ENCODE measurements at regions of chr4 and their contacts with region 1.

Region 1: DNA sequence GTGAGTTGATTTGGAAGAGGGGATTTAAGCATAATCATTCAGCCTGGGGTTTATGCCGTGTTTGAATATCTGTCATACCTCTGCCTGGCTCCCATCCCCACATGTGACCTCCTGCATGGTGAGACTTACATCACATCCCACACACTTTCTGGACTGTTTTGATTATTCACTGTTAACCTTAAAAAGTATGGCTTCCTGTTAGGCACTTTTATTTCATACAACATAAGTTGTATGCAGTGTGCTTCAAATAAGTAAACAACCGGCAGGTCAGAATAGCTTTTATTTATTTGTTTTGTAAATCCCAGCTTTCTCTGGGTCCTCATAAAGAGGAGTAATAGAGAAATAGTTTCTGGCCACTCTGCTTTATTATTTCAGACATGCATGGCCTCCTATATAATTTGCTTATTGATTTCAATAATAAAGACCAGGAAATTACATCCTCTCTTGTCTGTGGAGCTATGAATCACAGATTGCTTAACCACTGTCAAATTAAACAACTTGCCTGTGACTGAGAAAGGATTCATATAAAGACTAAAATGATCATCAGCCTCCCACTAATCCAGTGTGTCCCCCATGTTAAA is 376.8 kb upstream of the ZFP42 start:
- DNase-seq: no peak
- H3K4me3 ChIP-seq: no peak overlapping the region
- H3K27ac ChIP-seq: no peak overlapping the region
- H3K4me1 ChIP-seq: no peaks in the 10 kb centered on the region
- H3K27me3 ChIP-seq: no peaks in the 10 kb centered on the region
- CTCF ChIP-seq: no peak
- EP300 ChIP-seq: no peak
- POLR2A ChIP-seq: no peak

Region 2: GRCh38 chr4:187814737-187815465 is 196.1 kb after region 1 on chr4:
- in situ Hi-C with region 1: no loop called
- intact Hi-C with region 1: loop called (anchors 5 kb)
- DNase-seq: no peak
- H3K4me3 ChIP-seq: peak overlapping the region in 3 of 4 donors; percentile 16 to 36 (median 17)
- H3K27ac ChIP-seq: peak overlapping the region in 3 of 4 donors; percentile 38 to 55 (median 42)
- H3K4me1 ChIP-seq: no peaks in the 10 kb centered on the region
- H3K27me3 ChIP-seq: no peaks in the 10 kb centered on the region
- CTCF ChIP-seq: no peak
- EP300 ChIP-seq: no peak
- POLR2A ChIP-seq: no peak

Measured in transverse colon (tissue), 4 donors.